Activated CD4-positive, alpha-beta memory T cell treated with anti-CD3 and anti-CD28 coated beads for 36 hours (primary cell): ENCODE measurements at regions of chr14 and their contacts with region 1.

Region 1: GRCh38 chr14:94485944-94486841 is 10.2 kb upstream of the SERPINA9 start:
- DNase-seq: peak; percentile 57
- H3K4me3 Mint-ChIP-seq: no peak overlapping the region
- H3K27ac Mint-ChIP-seq: no peak overlapping the region
- H3K4me1 Mint-ChIP-seq: peaks cover 15% of the 10 kb centered on the region
- H3K27me3 Mint-ChIP-seq: peaks cover 13% of the 10 kb centered on the region

Region 2: DNA sequence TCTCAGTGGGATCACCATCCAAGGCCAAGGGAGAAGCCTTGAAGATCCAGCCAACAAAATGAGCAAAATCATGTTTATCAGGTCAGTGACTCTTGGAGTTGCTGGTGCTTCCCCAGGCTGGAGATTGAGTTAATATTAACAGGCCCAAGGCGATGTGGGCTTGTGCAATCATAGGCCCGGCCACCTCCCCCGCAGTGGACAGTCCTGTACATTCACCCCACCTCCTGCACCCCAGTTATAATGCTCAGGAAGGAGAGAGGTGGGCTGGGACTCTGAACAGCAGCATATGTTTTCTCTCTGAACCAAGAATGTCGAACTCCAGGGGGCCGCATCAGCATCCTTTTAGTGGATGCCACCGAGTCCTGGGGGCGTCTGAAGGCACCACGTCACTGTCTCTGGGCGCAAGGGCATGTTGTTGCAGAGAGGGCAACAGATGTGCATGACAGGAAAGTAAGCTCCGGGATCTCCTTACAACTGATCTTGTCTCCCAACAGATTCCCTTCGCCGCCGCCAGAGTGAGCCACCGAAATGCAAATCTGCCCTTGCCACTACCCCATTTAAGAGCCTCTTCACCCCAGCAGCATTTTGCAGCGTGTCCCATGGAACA is 130.9 kb before region 1 on chr14:
- CTCF ChIA-PET with region 1: no interaction called
- POLR2A ChIA-PET with region 1: no interaction called
- intact Hi-C with region 1: loop called (anchors 1 kb)
- DNase-seq: peak; percentile 51
- H3K4me3 Mint-ChIP-seq: no peak overlapping the region
- H3K27ac Mint-ChIP-seq: no peak overlapping the region
- H3K4me1 Mint-ChIP-seq: peaks cover 33% of the 10 kb centered on the region
- H3K27me3 Mint-ChIP-seq: peaks cover 9% of the 10 kb centered on the region

Region 3: DNA sequence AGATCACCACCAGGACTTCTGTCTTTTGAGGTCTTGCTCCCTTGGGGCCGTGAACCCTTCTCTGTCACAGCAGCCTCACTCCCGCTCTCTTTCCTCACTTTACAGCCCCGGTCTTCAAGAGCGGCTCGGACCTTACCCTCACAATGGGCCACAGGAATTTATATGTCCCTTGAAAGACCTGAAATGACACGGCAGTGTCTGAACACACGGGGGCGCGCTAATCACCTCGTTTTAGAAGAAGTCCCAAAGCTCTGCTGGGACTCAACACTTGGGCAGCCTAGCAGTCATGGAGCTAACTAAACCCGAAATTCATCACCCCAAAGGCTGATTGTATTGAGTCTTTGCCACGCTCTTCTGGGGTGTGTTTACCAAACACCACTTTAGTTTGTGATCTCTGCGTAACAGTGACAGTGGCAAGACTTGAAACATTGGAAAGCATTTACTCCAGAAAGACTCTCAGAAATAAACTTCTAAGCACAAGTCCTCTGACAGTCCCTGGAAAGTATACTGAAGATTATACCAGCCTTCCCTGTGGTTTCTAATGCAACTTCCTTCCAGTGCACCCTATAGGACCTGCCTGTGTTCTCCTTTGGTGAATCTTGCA is 62.6 kb before region 1 on chr14:
- CTCF ChIA-PET with region 1: interaction called, 17 read pairs
- POLR2A ChIA-PET with region 1: no interaction called
- intact Hi-C with region 1: loop called (anchors 2 kb)
- DNase-seq: peak; percentile 78
- H3K4me3 Mint-ChIP-seq: no peak overlapping the region
- H3K27ac Mint-ChIP-seq: no peak overlapping the region
- H3K4me1 Mint-ChIP-seq: peaks cover 7% of the 10 kb centered on the region
- H3K27me3 Mint-ChIP-seq: peaks cover 10% of the 10 kb centered on the region

Region 4: DNA sequence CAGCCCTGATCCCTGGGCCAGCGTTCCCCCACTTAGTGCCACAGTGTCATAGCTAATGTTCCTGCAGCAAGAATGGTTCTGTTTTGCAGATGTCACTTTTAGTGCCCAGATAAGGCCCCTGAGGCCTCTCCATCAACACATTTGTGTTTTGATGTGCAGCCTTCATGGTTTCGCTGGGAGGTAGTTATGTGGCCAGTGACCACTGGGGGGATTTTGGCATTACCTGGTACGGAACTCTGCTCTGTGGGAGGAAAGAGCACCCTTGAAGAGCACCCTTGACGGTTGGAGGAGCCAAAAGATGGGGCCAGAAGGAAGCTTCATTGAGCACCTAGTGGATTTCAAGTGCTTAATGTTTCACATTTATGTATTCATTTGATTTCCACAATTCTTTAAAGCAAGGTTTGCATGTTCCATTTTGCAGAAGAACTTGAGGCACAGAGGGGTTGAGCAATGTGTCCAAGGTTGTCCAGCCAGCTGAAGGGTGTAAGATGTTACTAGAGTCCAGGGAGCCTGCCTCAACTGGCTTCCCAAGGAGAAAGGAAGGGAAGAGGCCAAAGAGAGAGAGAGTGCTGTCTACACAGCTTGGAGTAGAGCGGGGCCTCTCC is 46.6 kb before region 1 on chr14:
- CTCF ChIA-PET with region 1: interaction called, 58 read pairs
- POLR2A ChIA-PET with region 1: no interaction called
- intact Hi-C with region 1: loop called (anchors 1 kb)
- DNase-seq: no peak
- H3K4me3 Mint-ChIP-seq: no peak overlapping the region
- H3K27ac Mint-ChIP-seq: no peak overlapping the region
- H3K4me1 Mint-ChIP-seq: no peaks in the 10 kb centered on the region
- H3K27me3 Mint-ChIP-seq: peaks cover 9% of the 10 kb centered on the region

Region 5: GRCh38 chr14:94474581-94475031 is 11.6 kb before region 1 on chr14:
- CTCF ChIA-PET with region 1: interaction called, 16 read pairs
- POLR2A ChIA-PET with region 1: no interaction called
- intact Hi-C with region 1: no loop called
- DNase-seq: no peak
- H3K4me3 Mint-ChIP-seq: no peak overlapping the region
- H3K27ac Mint-ChIP-seq: no peak overlapping the region
- H3K4me1 Mint-ChIP-seq: no peaks in the 10 kb centered on the region
- H3K27me3 Mint-ChIP-seq: peaks cover 9% of the 10 kb centered on the region

Region 6: DNA sequence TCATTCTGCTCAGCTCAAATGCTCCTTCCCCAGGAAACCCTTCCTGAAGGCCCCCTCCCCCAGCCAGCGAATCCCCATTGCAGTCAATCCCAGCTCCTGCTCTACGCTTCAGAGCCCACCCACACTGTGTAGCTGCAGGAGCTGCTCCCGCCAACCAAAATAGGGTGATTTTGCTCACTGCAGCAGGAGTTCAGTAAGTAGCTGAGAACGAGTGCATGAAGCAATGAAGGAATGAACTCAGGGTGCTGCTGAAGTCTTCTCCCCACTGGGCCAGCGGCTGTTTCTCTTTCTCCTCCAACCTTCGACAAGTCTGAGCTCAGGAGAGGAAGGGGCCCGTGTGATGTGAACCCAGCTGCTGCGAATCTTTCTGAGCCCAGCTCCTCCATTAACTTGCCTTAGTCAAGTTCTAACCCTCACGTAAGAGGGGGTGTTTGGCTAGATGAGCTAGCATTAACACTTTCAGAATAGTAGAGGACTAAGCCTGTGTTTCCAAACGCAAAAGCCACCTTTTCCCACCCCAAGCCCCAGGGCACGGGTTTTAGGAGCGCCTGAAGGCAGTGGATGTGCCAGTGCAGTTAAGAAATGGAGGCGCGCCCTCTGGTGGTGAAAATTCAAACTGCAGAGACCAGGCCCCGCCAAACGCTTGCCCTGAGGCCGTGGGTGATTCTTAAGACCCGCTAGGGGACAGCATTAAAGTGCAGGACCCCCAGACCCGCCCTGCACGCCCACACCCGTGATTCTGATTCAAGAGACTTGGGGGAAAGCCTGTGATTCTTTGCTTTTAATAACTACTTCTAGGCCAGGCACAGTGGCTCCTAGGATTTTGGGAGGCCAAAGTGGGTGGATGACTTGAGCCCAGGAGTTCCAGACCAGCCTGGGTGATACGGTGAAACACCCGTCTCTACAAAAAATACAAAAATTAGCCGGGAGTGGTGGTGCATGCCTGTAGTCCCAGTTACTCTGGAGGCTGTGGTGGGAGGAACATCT is 63.1 kb after region 1 on chr14:
- CTCF ChIA-PET with region 1: interaction called, 12 read pairs
- POLR2A ChIA-PET with region 1: no interaction called
- intact Hi-C with region 1: no loop called
- DNase-seq: peak; percentile 74
- H3K4me3 Mint-ChIP-seq: no peak overlapping the region
- H3K27ac Mint-ChIP-seq: no peak overlapping the region
- H3K4me1 Mint-ChIP-seq: no peaks in the 10 kb centered on the region
- H3K27me3 Mint-ChIP-seq: peaks cover 18% of the 10 kb centered on the region